Activated CD4-positive, alpha-beta memory T cell treated with anti-CD3 and anti-CD28 coated beads, Interleukin-2, amount 10 ng/mL, durations not matched to agents 7 days and 5 days (primary cell): ENCODE measurements at regions of chr14 and their contacts with region 1.

Region 1: GRCh38 chr14:22556990-22557623 is 31.9 kb downstream of the DAD1 start:
- DNase-seq: peak; percentile 90
- H3K4me3 Mint-ChIP-seq: peak overlapping the region; percentile 76
- H3K27ac Mint-ChIP-seq: peak overlapping the region; percentile 95
- H3K4me1 Mint-ChIP-seq: peaks cover 90% of the 10 kb centered on the region
- H3K27me3 Mint-ChIP-seq: peaks cover 2% of the 10 kb centered on the region

Region 2: DNA sequence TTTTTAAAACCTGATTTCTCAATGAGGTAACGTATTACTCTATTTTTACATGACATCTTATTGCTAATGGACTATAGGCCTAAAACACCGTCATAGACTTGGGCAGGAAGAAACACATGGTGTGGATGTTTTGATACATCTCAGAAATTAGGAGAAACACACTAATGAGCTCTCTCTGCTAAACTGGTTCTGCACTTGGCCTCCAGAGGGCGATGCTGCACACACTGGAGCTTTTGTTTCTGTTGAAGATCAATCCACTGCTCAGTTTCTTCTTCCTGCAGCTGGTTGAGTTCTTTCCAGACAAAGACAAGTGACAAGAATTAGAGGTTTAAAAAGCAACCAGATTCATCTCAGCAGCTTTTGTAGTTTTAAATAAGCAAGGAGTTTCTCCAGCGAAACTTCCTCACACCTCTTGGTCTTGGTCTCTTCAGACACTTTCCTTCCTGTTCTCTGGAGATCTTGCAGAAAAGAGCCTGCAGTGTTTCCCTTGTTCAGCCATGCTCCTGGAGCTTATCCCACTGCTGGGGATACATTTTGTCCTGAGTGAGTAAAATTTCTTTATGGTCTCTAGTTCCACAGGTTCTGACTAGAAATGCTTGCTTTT is 704.9 kb before region 1 on chr14:
- CTCF ChIA-PET with region 1: interaction called, 8 read pairs
- POLR2A ChIA-PET with region 1: interaction called, 17 read pairs
- DNase-seq: peak; percentile 78
- H3K4me3 Mint-ChIP-seq: peak overlapping the region; percentile 65
- H3K27ac Mint-ChIP-seq: peak overlapping the region; percentile 82
- H3K4me1 Mint-ChIP-seq: peaks cover 12% of the 10 kb centered on the region
- H3K27me3 Mint-ChIP-seq: peaks cover 23% of the 10 kb centered on the region

Region 3: DNA sequence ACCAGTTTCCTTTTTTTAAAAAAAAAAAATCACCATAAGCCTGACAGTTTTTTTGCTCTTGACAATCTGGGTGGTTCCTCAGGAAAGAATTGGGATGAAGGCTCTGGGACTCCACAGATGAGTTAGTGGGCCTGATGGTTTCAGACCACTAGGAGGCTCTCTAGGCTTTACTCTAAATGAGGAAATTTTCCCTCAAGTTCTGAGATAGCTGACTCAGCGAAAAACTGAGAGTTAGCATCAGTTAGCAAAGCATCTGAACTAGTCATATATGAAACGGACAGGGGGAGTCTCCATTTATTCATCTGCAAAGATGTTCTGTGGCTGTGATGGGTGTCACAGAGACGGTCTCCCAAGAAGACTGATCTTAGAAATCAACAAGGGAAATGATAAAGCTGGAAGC is 569.2 kb before region 1 on chr14:
- CTCF ChIA-PET with region 1: interaction called, 4 read pairs
- POLR2A ChIA-PET with region 1: interaction called, 16 read pairs
- DNase-seq: no peak
- H3K4me3 Mint-ChIP-seq: no peak overlapping the region
- H3K27ac Mint-ChIP-seq: peak overlapping the region; percentile 72
- H3K4me1 Mint-ChIP-seq: peaks cover 24% of the 10 kb centered on the region
- H3K27me3 Mint-ChIP-seq: peaks cover 10% of the 10 kb centered on the region

Region 4: GRCh38 chr14:22112004-22112403 is 445.1 kb before region 1 on chr14:
- CTCF ChIA-PET with region 1: interaction called, 10 read pairs
- POLR2A ChIA-PET with region 1: interaction called, 3 read pairs
- DNase-seq: peak; percentile 53
- H3K4me3 Mint-ChIP-seq: peak overlapping the region; percentile 74
- H3K27ac Mint-ChIP-seq: peak overlapping the region; percentile 58
- H3K4me1 Mint-ChIP-seq: peaks cover 27% of the 10 kb centered on the region
- H3K27me3 Mint-ChIP-seq: no peaks in the 10 kb centered on the region

Region 5: DNA sequence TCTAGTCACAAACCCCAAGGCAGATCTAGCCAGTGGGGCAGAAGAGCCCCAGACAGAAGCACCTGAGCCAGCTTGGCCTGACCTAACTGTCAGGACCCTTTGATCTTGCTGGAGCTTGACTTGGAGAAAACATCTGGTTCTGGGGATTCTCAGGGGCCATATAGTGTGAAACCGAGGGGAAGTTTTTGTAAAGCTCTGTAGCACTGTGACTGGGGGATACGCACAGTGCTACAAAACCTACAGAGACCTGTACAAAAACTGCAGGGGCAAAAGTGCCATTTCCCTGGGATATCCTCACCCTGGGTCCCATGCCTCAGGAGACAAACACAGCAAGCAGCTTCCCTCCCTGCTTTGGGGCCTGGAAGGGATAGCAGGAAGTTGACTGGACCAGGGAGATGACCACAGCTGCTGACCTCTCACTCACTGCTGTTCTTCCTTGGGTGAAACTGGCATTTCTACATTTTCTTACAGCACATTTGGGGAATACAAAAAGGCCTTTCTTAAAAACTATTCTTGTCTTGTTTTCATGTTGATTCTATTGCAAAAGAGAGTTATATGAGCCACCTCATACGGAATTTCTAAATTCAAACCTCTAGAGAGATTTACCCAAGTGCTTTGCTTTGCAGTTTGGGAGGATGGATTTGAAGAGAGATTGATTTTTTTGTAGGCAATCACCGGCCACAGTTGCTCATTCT is 108.1 kb before region 1 on chr14:
- CTCF ChIA-PET with region 1: no interaction called
- POLR2A ChIA-PET with region 1: no interaction called
- DNase-seq: no peak
- H3K4me3 Mint-ChIP-seq: no peak overlapping the region
- H3K27ac Mint-ChIP-seq: no peak overlapping the region
- H3K4me1 Mint-ChIP-seq: no peaks in the 10 kb centered on the region
- H3K27me3 Mint-ChIP-seq: no peaks in the 10 kb centered on the region

Region 6: DNA sequence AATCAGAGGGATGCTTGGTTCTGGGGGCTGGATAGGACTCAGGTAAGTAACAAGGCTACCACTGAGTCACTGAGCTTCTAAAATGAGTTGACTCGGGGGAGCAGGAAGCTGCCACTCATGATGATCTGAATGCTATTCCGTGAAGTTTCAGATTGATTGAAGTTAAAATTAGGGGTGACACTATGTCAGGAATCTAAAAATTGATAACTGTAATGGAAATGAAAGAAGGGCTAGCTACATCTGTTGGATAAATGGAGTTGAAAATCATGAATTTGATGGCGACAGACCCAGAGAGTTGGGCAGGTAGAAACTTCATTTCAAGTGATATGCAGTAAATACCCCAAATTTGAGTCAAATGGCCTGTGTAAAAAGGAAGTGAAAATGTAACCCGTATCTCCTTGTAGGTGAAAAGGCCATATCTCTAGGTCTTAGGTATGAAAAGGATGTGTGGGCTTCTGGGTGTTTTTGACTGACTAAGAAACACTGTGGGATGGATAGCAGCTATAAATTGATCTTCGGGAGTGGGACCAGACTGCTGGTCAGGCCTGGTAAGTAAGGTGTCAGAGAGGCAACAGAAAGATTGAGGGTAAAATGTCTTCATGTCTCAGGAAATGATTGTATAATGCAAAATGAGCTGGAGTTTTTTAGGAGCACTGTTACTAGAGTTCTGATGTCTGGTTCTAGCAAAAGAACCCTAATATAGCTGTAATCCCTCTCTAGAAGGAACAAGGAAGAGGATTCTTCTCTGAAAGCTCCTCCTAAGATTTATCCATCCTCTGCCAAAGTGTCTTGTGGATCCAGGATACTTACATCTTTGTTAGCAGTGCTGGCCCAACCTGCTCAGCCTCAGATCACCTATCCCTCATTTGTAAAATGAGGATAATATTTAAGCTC is 25.4 kb before region 1 on chr14:
- CTCF ChIA-PET with region 1: interaction called, 55 read pairs
- POLR2A ChIA-PET with region 1: interaction called, 630 read pairs
- DNase-seq: no peak
- H3K4me3 Mint-ChIP-seq: peak overlapping the region; percentile 82
- H3K27ac Mint-ChIP-seq: peak overlapping the region; percentile 96
- H3K4me1 Mint-ChIP-seq: peaks cover 90% of the 10 kb centered on the region
- H3K27me3 Mint-ChIP-seq: no peaks in the 10 kb centered on the region

Region 7: GRCh38 chr14:22598099-22598899 is 41.2 kb after region 1 on chr14 and contains the start of gene ABHD4:
- CTCF ChIA-PET with region 1: interaction called, 12 read pairs
- POLR2A ChIA-PET with region 1: interaction called, 8 read pairs
- DNase-seq: peak; percentile 79
- H3K4me3 Mint-ChIP-seq: peak within 1 kb of the TSS; percentile 88
- H3K27ac Mint-ChIP-seq: peak within 1 kb of the TSS; percentile 69
- H3K4me1 Mint-ChIP-seq: peaks cover 25% of the 10 kb centered on the region
- H3K27me3 Mint-ChIP-seq: peaks cover 14% of the 10 kb centered on the region
- total RNA-seq, gene ABHD4: 16.7 to 20.7 TPM

Region 8: DNA sequence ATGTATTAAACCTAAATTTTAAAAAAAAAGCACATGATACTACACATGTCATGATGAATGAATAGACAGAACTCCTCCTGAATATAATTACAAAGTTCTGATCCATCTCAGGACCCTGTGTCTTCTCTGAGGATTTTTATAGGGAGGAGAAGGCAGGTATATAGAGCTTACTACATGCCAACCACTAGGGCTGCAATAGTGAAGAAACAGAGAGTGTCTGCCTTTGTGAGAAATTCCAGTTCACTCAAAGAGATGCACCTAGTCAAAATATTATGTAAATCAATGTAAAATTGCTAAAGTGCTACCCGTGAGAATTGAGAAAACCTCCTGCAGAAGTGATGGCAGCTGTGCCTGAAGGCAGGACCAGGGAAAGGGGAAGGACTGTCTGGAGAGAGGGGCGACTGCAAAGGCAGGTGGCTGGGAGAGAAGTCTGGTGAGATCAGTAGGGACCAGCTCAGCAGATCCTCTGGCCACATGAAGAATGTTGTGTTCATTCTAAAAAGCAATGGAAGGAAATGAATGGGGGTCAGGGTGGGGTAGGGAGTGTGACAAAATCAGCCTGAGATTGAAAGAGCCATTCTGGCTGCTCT is 56.1 kb after region 1 on chr14:
- CTCF ChIA-PET with region 1: no interaction called
- POLR2A ChIA-PET with region 1: no interaction called
- DNase-seq: no peak
- H3K4me3 Mint-ChIP-seq: no peak overlapping the region
- H3K27ac Mint-ChIP-seq: no peak overlapping the region
- H3K4me1 Mint-ChIP-seq: no peaks in the 10 kb centered on the region
- H3K27me3 Mint-ChIP-seq: no peaks in the 10 kb centered on the region

Region 9: DNA sequence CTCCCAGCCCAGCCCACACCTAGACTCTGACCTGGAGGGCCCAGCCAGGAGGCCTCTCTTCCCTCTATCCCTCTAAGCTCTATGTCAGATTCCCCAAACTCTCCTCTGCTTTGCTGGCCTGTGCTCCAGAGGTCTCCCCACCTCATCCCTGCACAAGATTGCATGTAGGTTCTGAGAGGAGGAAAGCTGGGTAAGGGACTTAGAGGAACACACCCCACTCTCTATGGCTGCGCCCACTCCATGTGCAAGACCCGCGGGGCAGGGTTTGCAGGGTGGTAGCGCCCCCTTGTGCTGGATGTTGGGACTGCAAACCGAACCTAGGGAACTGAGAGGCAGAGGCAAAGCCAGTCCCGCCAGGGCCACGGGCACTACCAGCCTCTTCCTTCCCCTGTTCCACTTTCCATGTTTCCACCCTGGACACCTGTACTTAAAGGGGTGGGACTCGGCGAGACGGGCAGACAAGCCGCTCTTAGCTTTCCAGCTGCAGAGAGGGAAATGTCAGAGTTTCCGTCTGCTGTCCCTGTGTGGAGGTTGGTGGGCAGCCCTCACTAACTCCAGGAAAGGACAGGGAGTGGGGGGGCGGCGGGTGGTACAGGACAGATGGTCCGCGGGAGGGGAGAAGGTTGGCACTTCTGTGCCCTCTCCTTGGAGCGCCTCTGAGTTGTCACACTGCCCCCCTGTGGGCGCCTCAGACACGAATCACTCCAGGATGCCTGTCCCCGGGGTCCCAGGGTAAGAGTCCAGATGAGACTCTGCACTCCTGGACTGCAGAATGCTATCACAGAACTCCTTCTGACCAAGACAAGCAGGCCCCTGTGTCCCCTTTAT is 296.0 kb after region 1 on chr14:
- CTCF ChIA-PET with region 1: interaction called, 29 read pairs
- POLR2A ChIA-PET with region 1: interaction called, 5 read pairs
- DNase-seq: peak; percentile 90
- H3K4me3 Mint-ChIP-seq: peak overlapping the region; percentile 68
- H3K27ac Mint-ChIP-seq: peak overlapping the region; percentile 44
- H3K4me1 Mint-ChIP-seq: peaks cover 46% of the 10 kb centered on the region
- H3K27me3 Mint-ChIP-seq: peaks cover 23% of the 10 kb centered on the region